GM12878 (cell line): ENCODE measurements at regions of chr6 and their contacts with region 1.

Region 1: DNA sequence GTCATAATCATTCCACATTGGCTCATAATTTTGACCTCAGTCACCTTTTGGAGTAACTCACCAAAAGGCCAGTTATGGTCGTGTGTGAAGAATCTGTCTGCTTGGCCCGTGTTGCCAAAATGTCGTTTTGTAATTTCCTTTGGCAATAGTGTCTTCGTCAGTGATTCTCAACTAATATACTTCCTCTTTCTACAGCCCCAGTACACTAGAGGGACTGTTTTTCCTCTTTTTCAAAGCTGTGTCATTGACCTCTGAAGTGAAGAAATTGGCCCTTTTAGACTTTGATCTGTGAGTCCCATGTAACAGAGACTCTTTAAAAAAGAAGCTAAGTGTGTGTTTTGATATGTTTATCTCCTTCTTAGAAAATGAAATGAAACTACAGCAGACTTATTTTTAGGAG is 5.2 kb downstream of the FOXO3 start:
- DNase-seq: no peak
- ATAC-seq: peak; percentile 69
- H3K4me3 ChIP-seq: peak overlapping the region; percentile 23; the same call in 1 of the 2 replicates
- H3K27ac ChIP-seq: peak overlapping the region; percentile 77
- H3K4me1 ChIP-seq: peaks cover 28% of the 10 kb centered on the region
- H3K27me3 ChIP-seq: no peaks in the 10 kb centered on the region; a peak in 1 of 4 replicates
- CTCF ChIP-seq: peak in 1 of 3 experiments; percentile 34; a peak in 2 of 6 replicates
- EP300 ChIP-seq: peak in 1 of 2 experiments; percentile 33; a peak in 1 of 4 replicates
- POLR2A ChIP-seq: no peak
- RAD21 ChIP-seq: peak; percentile 50

Region 2: GRCh38 chr6:108576709-108577108 is 10.8 kb after region 1 on chr6:
- CTCF ChIA-PET with region 1: interaction called, 11 read pairs
- POLR2A ChIA-PET with region 1: no interaction called
- RAD21 ChIA-PET with region 1: interaction called, 3 read pairs
- SMC1A ChIA-PET with region 1: interaction called, 24 read pairs
- in situ Hi-C with region 1: no loop called
- intact Hi-C with region 1: no loop called
- DNase-seq: no peak
- ATAC-seq: no peak; the same call in 2 of the 3 replicates
- H3K4me3 ChIP-seq: no peak overlapping the region
- H3K27ac ChIP-seq: no peak overlapping the region
- H3K4me1 ChIP-seq: no peaks in the 10 kb centered on the region
- H3K27me3 ChIP-seq: no peaks in the 10 kb centered on the region
- CTCF ChIP-seq: no peak
- EP300 ChIP-seq: no peak
- POLR2A ChIP-seq: no peak
- RAD21 ChIP-seq: no peak

Region 3: GRCh38 chr6:108592371-108593337 is 26.8 kb after region 1 on chr6:
- CTCF ChIA-PET with region 1: interaction called, 10 read pairs
- POLR2A ChIA-PET with region 1: interaction called, 5 read pairs
- RAD21 ChIA-PET with region 1: interaction called, 25 read pairs
- SMC1A ChIA-PET with region 1: interaction called, 26 read pairs
- in situ Hi-C with region 1: no loop called
- intact Hi-C with region 1: loop called (anchors 1 kb)
- DNase-seq: peak; percentile 76
- ATAC-seq: peak; percentile 85
- H3K4me3 ChIP-seq: no peak overlapping the region
- H3K27ac ChIP-seq: peak overlapping the region; percentile 77
- H3K4me1 ChIP-seq: peaks cover 56% of the 10 kb centered on the region
- H3K27me3 ChIP-seq: no peaks in the 10 kb centered on the region; a peak in 1 of 4 replicates
- CTCF ChIP-seq: no peak
- EP300 ChIP-seq: peak; percentile 71; a peak in 3 of 4 replicates
- POLR2A ChIP-seq: no peak
- RAD21 ChIP-seq: no peak

Region 4: DNA sequence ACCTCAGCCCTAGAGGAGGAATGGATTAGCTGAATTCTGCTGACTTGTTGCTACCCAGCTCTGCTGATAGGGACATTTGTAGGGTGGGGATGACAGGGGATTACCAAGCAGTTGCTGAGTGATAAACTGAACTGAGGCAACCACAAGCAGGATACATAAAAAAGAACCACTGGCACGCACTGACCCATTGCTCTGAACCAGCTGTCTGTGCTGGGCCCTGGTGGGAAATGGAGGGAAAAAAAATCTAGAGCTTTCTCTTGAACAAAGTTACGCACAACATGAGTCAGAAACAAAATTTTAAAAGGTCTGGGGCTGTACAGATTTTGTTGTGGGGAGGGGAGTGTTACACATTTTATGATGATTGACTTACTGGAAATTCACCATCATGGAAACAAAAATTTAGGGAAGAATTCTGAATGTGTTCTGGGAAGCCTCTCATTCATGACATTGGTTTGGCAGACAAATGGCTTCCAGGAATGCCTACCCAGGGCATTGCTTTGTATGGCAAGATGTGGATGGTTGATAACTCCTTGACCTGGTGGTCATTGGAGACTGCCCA is 32.5 kb after region 1 on chr6:
- CTCF ChIA-PET with region 1: interaction called, 10 read pairs
- POLR2A ChIA-PET with region 1: interaction called, 5 read pairs
- RAD21 ChIA-PET with region 1: interaction called, 25 read pairs
- SMC1A ChIA-PET with region 1: interaction called, 26 read pairs
- in situ Hi-C with region 1: no loop called
- intact Hi-C with region 1: loop called (anchors 1 kb)
- DNase-seq: peak; percentile 87
- ATAC-seq: peak; percentile 89
- H3K4me3 ChIP-seq: no peak overlapping the region
- H3K27ac ChIP-seq: peak overlapping the region; percentile 95
- H3K4me1 ChIP-seq: peaks cover 29% of the 10 kb centered on the region
- H3K27me3 ChIP-seq: no peaks in the 10 kb centered on the region
- CTCF ChIP-seq: no peak
- EP300 ChIP-seq: peak; percentile 96 to 97
- POLR2A ChIP-seq: no peak
- RAD21 ChIP-seq: 0 out of 2 replicates have a peak, but pooled peaks have one; percentile 10